ENCODE measurements at regions of chr5 and their contacts with region 1.

Region 1: DNA sequence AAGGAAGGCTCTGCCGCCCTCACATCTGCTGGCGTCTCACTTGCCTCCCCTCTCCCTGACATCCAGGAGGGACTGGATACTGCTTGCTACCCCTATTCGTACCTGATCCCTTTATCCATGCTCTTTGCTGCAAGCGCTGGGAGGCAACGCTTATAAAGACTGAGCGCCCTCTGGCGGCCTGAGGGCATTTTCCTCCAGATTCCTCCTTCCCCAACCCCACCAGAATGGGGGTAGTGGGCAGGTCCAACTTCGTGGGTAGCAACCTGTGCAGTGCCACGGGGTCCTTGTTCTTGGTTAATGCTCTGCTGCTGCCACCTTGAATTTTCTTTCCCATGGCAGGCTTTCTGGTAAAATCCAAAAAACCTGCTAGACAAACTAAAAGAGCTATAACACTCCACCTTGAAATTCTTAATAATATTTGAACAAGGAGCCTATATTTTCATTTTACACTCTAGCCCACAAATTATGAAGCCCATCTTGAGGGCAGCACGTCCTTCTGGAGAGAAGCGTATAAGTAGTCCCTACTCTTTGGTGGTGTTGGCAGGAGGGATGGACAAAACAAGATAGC is 52.4 kb downstream of the JADE2 start:
- DNase-seq: no peak
- ATAC-seq: peak; percentile 92
- H3K4me3 ChIP-seq: no peak overlapping the region
- H3K27ac ChIP-seq: no peak overlapping the region
- H3K4me1 ChIP-seq: no peaks in the 10 kb centered on the region
- H3K27me3 ChIP-seq: no peaks in the 10 kb centered on the region
- CTCF ChIP-seq: peak; percentile 79 to 91 (median 87)
- EP300 ChIP-seq: no peak
- POLR2A ChIP-seq: no peak
- RAD21 ChIP-seq: peak; percentile 92

Region 2: DNA sequence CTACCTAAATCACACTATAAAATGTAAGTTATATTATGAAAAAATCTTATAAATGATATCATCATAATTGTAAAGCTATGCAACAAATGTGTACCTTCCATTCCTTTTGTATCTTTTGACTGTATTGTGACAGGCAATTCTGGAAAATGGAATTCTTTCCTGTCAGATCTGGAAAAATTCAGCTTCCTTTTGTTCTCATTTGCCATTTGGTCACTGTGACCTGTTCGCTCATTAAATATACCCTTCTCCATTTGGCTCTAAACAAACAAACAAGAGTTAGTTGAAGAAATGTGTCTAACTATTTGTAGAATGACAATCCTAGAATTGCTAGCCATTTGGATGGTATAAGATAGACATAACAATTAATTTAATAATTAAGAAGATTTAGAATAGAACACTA is 273.6 kb before region 1 on chr5:
- CTCF ChIA-PET with region 1: interaction called, 14 read pairs
- POLR2A ChIA-PET with region 1: no interaction called
- RAD21 ChIA-PET with region 1: interaction called, 7 read pairs
- SMC1A ChIA-PET with region 1: interaction called, 10 read pairs
- in situ Hi-C with region 1: loop called (anchors 5 kb)
- intact Hi-C with region 1: no loop called
- DNase-seq: no peak
- ATAC-seq: no peak
- H3K4me3 ChIP-seq: no peak overlapping the region
- H3K27ac ChIP-seq: no peak overlapping the region
- H3K4me1 ChIP-seq: no peaks in the 10 kb centered on the region
- H3K27me3 ChIP-seq: no peaks in the 10 kb centered on the region
- CTCF ChIP-seq: no peak
- EP300 ChIP-seq: no peak
- POLR2A ChIP-seq: no peak
- RAD21 ChIP-seq: no peak

Measured in GM12878 (cell line).